GM18951 (cell line): ENCODE measurements at regions of chr12 and their contacts with region 1.

Region 1: DNA sequence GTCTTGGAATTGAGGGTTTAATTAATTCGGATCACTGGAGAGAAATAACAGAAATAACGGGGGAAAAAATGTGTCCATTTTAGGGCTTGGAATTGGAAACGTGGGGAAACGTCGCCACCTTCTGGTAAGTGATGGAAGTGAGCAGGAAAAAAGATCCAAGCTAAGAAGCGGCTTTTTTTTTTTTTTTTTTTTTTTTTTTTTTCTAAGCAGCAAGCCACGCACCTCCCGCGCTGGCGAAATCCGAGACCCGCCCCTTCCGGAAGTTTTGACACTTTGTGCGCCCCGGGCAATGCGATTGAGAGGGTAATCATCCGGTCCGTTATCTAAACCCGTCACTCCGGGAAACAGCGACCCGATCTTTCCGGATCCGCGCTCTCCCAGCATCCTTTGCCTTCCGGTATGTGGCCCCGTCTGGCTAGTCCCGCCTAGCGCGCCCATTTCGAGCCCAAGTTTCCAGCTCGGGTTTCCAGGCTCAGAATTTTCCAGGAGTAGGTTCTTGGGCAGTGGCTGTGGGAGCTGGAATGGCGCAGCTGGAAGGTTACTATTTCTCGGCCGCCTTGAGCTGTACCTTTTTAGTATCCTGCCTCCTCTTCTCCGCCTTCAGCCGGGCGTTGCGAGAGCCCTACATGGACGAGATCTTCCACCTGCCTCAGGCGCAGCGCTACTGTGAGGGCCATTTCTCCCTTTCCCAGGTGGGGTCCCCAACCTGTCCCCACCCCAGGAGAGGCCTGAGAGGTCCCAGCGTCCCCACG is at the start of gene ALG10:
- POLR2A ChIP-seq: peak; percentile 75

Region 2: GRCh38 chr12:32455607-32456071 is 1566.6 kb before region 1 on chr12:
- in situ Hi-C with region 1: loop called (anchors 25 kb)
- POLR2A ChIP-seq: no peak

Region 3: GRCh38 chr12:32755654-32756475 is 1266.4 kb before region 1 on chr12 and contains the start of gene YARS2:
- in situ Hi-C with region 1: loop called (anchors 25 kb)
- POLR2A ChIP-seq: peak; percentile 88

Region 4: GRCh38 chr12:32947206-32948067 is 1074.8 kb before region 1 on chr12:
- in situ Hi-C with region 1: loop called (anchors 25 kb)
- POLR2A ChIP-seq: no peak

Region 5: GRCh38 chr12:33439282-33440011 is 582.8 kb before region 1 on chr12 and contains the start of gene SYT10:
- in situ Hi-C with region 1: loop called (anchors 25 kb)
- POLR2A ChIP-seq: no peak